Naive thymus-derived CD4-positive, alpha-beta T cell (primary cell): ENCODE measurements at regions of chr20 and their contacts with region 1.

Region 1: DNA sequence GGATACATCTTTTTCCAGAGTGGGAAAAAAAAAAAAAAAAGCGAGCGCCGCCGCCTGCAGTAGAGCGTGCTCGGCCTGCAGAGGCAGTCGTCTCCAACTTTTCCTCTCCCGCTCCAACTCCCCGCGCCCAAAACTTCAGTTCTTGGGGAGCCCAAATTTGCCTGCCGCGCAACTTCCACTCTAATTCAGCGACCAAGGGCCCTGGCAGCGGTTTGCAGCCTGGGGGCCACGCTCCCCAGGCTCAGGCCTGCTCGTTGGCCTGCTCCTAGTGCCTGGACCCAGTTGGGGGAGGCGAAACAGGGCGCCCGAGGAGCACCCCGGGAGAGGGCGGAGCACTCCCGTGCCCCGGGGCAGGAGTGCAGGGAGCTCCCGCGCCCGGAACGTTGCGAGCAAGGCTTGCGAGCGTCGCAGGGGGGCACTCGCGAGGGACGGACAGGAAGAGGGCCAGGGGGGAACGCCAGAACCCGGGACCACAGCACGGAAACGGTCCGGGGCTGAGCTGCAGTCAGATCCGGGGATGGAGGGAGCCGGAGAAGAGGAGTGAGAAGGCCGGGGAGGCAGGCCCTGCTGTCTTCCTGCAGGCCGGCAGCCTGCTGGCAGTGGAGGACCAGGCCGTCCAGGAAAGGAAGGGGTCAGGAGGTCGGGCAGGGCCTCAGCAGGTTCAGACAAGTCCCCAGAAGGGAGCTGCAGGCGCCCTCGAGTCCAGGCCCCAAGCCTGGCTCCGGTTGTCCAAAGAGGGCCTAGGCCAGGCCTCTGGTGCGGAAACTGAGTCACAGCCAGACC is at the start of gene STX16:
- DNase-seq: peak; percentile 76 to 87 (median 84)
- ATAC-seq: peak; percentile 83
- H3K4me3 ChIP-seq: peak within 1 kb of the TSS; percentile 94
- H3K4me3 Mint-ChIP-seq: peak within 1 kb of the TSS; percentile 94 to 100 (median 98)
- H3K27ac ChIP-seq: peak within 1 kb of the TSS; percentile 93
- H3K27ac Mint-ChIP-seq: peak within 1 kb of the TSS; percentile 97 to 100 (median 99)
- H3K4me1 ChIP-seq: peaks cover 24 to 32% of the 10 kb centered on the region in 2 donors
- H3K4me1 Mint-ChIP-seq: peaks cover 14 to 35% (median 28%) of the 10 kb centered on the region in 7 donors
- H3K27me3 ChIP-seq: no peaks in the 10 kb centered on the region
- H3K27me3 Mint-ChIP-seq: peaks cover 0 to 4% (median 0%) of the 10 kb centered on the region in 5 donors
- total RNA-seq, gene STX16: 173 to 225 (median 189) TPM

Region 2: GRCh38 chr20:57391074-57391554 is 1259.9 kb before region 1 on chr20 and contains the start of gene RBM38:
- CTCF ChIA-PET with region 1: no interaction called
- POLR2A ChIA-PET with region 1: interaction called, 3 read pairs
- intact Hi-C with region 1: loop called (anchors 1 to 10 kb)
- DNase-seq: peak; percentile 64 to 89 (median 71)
- ATAC-seq: peak; percentile 83
- H3K4me3 ChIP-seq: peak within 1 kb of the TSS; percentile 99
- H3K4me3 Mint-ChIP-seq: peak within 1 kb of the TSS; percentile 90 to 99 (median 98)
- H3K27ac ChIP-seq: peak within 1 kb of the TSS; percentile 83
- H3K27ac Mint-ChIP-seq: peak within 1 kb of the TSS; percentile 92 to 100 (median 99)
- H3K4me1 ChIP-seq: peaks cover 45 to 47% of the 10 kb centered on the region in 2 donors
- H3K4me1 Mint-ChIP-seq: peaks cover 36 to 54% (median 45%) of the 10 kb centered on the region in 7 donors
- H3K27me3 ChIP-seq: no peaks in the 10 kb centered on the region
- H3K27me3 Mint-ChIP-seq: no peaks in the 10 kb centered on the region
- total RNA-seq, gene RBM38: 70.6 to 260 (median 127) TPM

Region 3: GRCh38 chr20:58388882-58389323 is 262.1 kb before region 1 on chr20 and contains the start of gene VAPB:
- CTCF ChIA-PET with region 1: no interaction called
- POLR2A ChIA-PET with region 1: interaction called, 26 read pairs
- intact Hi-C with region 1: loop called (anchors 1 kb)
- DNase-seq: peak; percentile 94 to 99 (median 98)
- ATAC-seq: peak; percentile 98
- H3K4me3 ChIP-seq: peak within 1 kb of the TSS; percentile 77
- H3K4me3 Mint-ChIP-seq: peak within 1 kb of the TSS; percentile 82 to 100 (median 96)
- H3K27ac ChIP-seq: peak within 1 kb of the TSS; percentile 100
- H3K27ac Mint-ChIP-seq: peak within 1 kb of the TSS; percentile 84 to 99 (median 97)
- H3K4me1 ChIP-seq: peaks cover 13 to 28% of the 10 kb centered on the region in 2 donors
- H3K4me1 Mint-ChIP-seq: peaks cover 29 to 44% (median 42%) of the 10 kb centered on the region in 7 donors
- H3K27me3 ChIP-seq: no peaks in the 10 kb centered on the region
- H3K27me3 Mint-ChIP-seq: peaks cover 0 to 11% (median 0%) of the 10 kb centered on the region in 5 donors
- total RNA-seq, gene VAPB: 23.0 to 37.0 (median 27.6) TPM

Region 4: GRCh38 chr20:58703264-58703663 is 52.3 kb after region 1 on chr20:
- CTCF ChIA-PET with region 1: interaction called, 4 read pairs
- POLR2A ChIA-PET with region 1: interaction called, 4 read pairs
- intact Hi-C with region 1: loop called in 1 of 2 experiments (anchors 1 kb)
- DNase-seq: no peak
- ATAC-seq: no peak
- H3K4me3 ChIP-seq: no peak overlapping the region
- H3K4me3 Mint-ChIP-seq: no peak overlapping the region
- H3K27ac ChIP-seq: no peak overlapping the region
- H3K27ac Mint-ChIP-seq: no peak overlapping the region
- H3K4me1 ChIP-seq: no peaks in the 10 kb centered on the region
- H3K4me1 Mint-ChIP-seq: peaks cover 0 to 4% (median 0%) of the 10 kb centered on the region in 7 donors
- H3K27me3 ChIP-seq: no peaks in the 10 kb centered on the region
- H3K27me3 Mint-ChIP-seq: no peaks in the 10 kb centered on the region

Region 5: DNA sequence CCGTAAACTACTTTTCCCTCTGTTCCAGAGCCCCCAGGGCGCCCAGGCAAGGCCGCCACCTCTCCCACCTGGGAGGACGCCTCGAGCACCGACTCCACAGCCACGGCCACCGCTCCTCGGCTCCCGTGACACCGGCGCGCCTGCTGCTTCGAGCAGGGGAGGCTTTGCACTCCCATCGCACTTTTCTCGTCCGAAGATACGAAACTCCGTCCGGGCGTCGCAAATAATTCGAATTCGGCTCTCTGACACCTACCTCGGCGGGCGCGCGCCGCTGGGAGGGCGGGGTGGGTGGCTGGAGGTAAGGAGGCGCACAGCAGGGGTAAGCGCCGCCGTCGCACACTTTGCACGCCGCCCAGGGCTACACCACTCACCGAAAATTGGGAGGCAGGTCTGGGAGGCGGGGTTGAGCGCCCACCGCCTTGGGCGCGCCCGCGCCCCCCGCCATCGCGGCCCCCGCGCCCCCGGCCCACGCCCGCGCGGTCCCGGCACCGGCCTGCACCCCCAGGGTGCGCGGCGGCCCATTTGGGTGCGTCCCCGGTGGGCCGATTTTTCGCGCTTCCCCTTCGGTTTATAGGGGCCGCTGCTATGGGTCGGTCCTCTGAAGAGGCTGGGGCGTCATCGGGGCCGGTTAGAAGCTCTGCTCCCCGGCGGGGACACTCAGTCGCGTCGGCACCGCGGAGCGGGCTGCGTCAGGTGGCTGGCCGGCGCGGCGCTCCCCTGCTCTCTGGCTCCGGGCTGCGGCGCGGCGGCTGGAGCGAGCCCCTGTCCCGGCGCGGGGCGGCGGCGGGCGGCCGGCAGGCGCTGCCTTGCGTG is 237.8 kb after region 1 on chr20:
- CTCF ChIA-PET with region 1: no interaction called
- POLR2A ChIA-PET with region 1: interaction called, 17 read pairs
- intact Hi-C with region 1: loop called (anchors 1 kb)
- DNase-seq: peak; percentile 64 to 91 (median 86)
- ATAC-seq: peak; percentile 76
- H3K4me3 ChIP-seq: peak overlapping the region; percentile 68
- H3K4me3 Mint-ChIP-seq: peak overlapping the region; percentile 81 to 94 (median 87)
- H3K27ac ChIP-seq: peak overlapping the region; percentile 95
- H3K27ac Mint-ChIP-seq: peak overlapping the region; percentile 67 to 97 (median 90)
- H3K4me1 ChIP-seq: peaks cover 4 to 6% of the 10 kb centered on the region in 2 donors
- H3K4me1 Mint-ChIP-seq: peaks cover 15 to 46% (median 37%) of the 10 kb centered on the region in 7 donors
- H3K27me3 ChIP-seq: no peaks in the 10 kb centered on the region
- H3K27me3 Mint-ChIP-seq: peaks cover 0 to 3% (median 0%) of the 10 kb centered on the region in 5 donors

Region 6: DNA sequence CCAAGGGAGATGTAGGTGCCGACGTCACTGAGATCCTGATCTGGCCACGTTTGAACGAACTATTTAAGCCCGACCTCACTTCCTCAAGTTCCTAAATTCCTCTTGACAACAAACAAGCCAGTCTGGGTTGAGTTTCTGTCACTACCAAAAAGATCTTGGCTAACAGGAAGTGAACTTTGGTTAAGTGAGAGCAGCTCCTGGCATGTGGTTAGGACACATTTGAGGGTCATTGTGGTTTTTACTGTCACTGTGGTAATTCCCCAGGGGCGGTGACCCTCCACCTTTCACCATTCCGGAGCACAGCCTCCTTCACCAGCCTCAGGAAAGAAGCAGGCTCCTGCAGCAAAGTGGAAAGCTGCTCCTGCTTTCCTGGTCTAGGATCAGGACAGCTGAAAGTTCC is 469.5 kb after region 1 on chr20:
- CTCF ChIA-PET with region 1: no interaction called
- POLR2A ChIA-PET with region 1: no interaction called
- intact Hi-C with region 1: loop called in 1 of 2 experiments (anchors 5 kb)
- DNase-seq: peak in 7 of 9 donors; percentile 23 to 48 (median 35)
- ATAC-seq: peak; percentile 40
- H3K4me3 ChIP-seq: no peak overlapping the region
- H3K4me3 Mint-ChIP-seq: peak overlapping the region; percentile 33 to 96 (median 56)
- H3K27ac ChIP-seq: peak overlapping the region; percentile 94
- H3K27ac Mint-ChIP-seq: peak overlapping the region; percentile 64 to 100 (median 100)
- H3K4me1 ChIP-seq: peaks cover 60 to 84% of the 10 kb centered on the region in 2 donors
- H3K4me1 Mint-ChIP-seq: peaks cover 51 to 98% (median 90%) of the 10 kb centered on the region in 7 donors
- H3K27me3 ChIP-seq: no peaks in the 10 kb centered on the region
- H3K27me3 Mint-ChIP-seq: no peaks in the 10 kb centered on the region

Region 7: GRCh38 chr20:59403261-59403961 is 752.4 kb after region 1 on chr20:
- CTCF ChIA-PET with region 1: interaction called, 3 read pairs
- POLR2A ChIA-PET with region 1: no interaction called
- intact Hi-C with region 1: loop called in 1 of 2 experiments (anchors 5 kb)
- DNase-seq: peak; percentile 65 to 91 (median 77)
- ATAC-seq: peak; percentile 93
- H3K4me3 ChIP-seq: peak overlapping the region; percentile 53
- H3K4me3 Mint-ChIP-seq: peak overlapping the region in 1 of 10 donors; percentile 59
- H3K27ac ChIP-seq: peak overlapping the region; percentile 41
- H3K27ac Mint-ChIP-seq: peak overlapping the region in 4 of 9 donors; percentile 49 to 94 (median 85)
- H3K4me1 ChIP-seq: peaks cover 12 to 35% of the 10 kb centered on the region in 2 donors
- H3K4me1 Mint-ChIP-seq: peaks cover 0 to 4% (median 2%) of the 10 kb centered on the region in 7 donors
- H3K27me3 ChIP-seq: peaks cover 0 to 7% of the 10 kb centered on the region in 2 donors
- H3K27me3 Mint-ChIP-seq: peaks cover 0 to 18% (median 3%) of the 10 kb centered on the region in 5 donors